ENCODE measurements at regions of chr1 and their contacts with region 1.

Region 1: GRCh38 chr1:201224666-201225370 is 34.2 kb downstream of the IGFN1 start:
- DNase-seq: no peak
- ATAC-seq: no peak

Region 2: GRCh38 chr1:201016211-201016651 is 208.6 kb before region 1 on chr1:
- intact Hi-C with region 1: no loop called
- DNase-seq: peak; percentile 42
- ATAC-seq: no peak

Region 3: GRCh38 chr1:201085916-201086735 is 138.7 kb before region 1 on chr1:
- intact Hi-C with region 1: loop called in 1 of 2 experiments (anchors 2 kb)
- DNase-seq: peak; percentile 48
- ATAC-seq: peak; percentile 68 to 81

Region 4: GRCh38 chr1:201149400-201149799 is 75.4 kb before region 1 on chr1:
- intact Hi-C with region 1: loop called in 1 of 2 experiments (anchors 5 kb)
- DNase-seq: no peak
- ATAC-seq: no peak

Region 5: DNA sequence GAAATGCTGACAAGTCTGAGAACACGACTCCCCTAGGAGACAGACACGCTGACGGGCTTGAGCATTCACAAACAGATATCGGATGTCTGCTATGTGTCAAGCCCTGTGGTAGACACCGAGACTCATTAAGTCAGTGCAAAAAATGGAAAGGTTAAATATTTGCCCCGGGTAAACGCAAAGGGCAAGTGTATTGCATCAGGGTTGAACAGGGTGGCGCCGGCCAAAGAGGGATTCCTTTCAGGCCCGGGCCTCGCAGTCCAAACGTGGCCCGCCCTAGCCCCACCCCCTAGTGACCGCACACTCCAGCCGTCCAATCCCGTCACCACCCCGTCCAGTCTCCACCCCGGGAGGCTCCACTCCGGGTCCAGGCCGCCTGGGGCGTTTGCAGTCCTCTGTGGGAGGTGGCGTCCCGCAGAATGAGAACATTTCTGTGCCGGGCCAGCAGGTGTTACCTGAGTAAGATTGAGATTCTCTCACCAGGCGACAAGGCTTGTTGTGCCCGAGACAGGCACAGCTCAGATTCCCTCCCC is 54.2 kb before region 1 on chr1:
- intact Hi-C with region 1: no loop called
- DNase-seq: peak; percentile 96
- ATAC-seq: peak; percentile 99